Activated CD4-positive, alpha-beta T cell treated with anti-CD3 and anti-CD28 coated beads for 36 hours (primary cell): ENCODE measurements at regions of chr22 and their contacts with region 1.

Region 1: GRCh38 chr22:44497218-44497904 is 672 bp downstream of the RTL6 start:
- DNase-seq: no peak
- ATAC-seq: no peak
- H3K4me3 Mint-ChIP-seq: peak overlapping the region; percentile 68
- H3K27ac Mint-ChIP-seq: peak overlapping the region; percentile 47
- H3K4me1 Mint-ChIP-seq: peaks cover 30% of the 10 kb centered on the region
- H3K27me3 Mint-ChIP-seq: no peaks in the 10 kb centered on the region

Region 2: DNA sequence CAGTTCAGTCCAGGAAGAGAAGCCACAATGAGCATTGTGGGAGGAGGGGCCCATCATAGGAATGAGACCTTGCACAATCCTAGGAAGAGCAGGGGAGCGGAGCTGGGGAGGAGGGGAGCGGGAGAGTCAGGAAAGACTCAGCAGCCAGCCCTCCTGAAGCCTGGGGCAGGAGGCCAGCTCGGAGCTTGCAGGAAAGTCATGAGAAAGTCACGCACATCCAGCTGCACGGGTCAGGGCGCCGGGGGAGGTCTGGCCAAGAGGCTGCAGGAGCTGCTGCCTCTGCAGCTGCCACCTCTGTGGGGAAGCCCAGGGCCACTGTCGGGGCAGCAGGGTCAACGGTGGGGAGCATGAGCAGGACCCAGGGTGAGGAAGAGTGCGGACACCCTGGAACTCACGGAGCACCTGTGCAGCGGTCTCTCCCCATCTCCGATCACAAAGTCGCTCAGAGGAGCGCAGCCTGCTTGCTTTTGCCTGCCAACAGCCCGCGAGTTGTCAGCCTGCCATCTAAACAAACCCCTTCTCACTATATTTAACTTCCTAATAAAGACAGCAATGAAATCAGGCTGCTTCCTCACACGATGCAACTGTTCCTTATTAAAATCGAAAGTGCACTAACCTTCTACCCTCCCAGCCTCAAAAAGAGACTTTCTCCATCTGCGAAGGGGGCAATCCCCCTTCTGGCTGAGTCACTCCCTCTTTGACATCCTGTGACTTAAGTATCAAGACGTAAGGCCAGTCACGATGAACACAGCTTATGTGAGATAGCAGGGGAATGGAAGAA is 53.5 kb after region 1 on chr22:
- CTCF ChIA-PET with region 1: no interaction called
- POLR2A ChIA-PET with region 1: no interaction called
- intact Hi-C with region 1: loop called in 1 of 2 experiments (anchors 1 kb)
- DNase-seq: peak; percentile 68
- ATAC-seq: peak; percentile 99
- H3K4me3 Mint-ChIP-seq: no peak overlapping the region
- H3K27ac Mint-ChIP-seq: no peak overlapping the region
- H3K4me1 Mint-ChIP-seq: peaks cover 10% of the 10 kb centered on the region
- H3K27me3 Mint-ChIP-seq: peaks cover 7% of the 10 kb centered on the region

Region 3: DNA sequence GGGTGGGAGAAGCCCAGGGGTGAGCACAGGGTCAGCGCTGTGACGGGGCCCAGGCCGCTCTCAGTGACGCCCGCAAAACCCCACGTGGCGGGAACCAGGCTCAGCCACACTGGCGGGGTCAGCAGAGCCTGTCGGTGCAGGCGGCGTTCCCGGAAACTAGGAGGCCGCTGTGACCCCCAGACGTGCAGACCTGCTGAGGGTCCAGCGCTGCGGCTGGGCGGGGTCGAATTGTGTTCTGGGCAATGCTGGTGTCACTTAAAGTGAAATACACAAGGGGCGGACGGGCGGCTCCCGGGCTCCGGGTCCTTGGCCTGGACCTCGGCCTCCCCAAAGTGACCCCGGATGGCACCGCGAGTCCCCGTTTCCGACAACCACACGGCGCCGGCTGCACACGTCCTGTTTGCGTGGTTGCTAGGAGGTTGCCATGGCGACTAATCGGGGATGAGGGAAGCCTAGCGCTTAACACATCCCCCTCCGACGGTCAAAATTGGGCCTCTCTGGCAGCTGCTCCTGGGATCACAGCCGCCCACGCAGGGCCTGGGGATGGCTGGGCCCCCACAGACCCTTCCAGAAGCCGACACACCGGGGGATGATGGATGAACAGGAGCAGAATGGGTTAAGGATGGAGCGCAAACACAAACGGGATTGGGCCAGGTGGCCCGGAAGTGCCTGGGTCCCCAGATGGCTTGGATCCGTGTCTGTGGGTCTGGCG is 122.9 kb after region 1 on chr22:
- CTCF ChIA-PET with region 1: no interaction called
- POLR2A ChIA-PET with region 1: no interaction called
- intact Hi-C with region 1: loop called in 1 of 2 experiments (anchors 1 kb)
- DNase-seq: peak; percentile 89
- ATAC-seq: peak; percentile 76
- H3K4me3 Mint-ChIP-seq: no peak overlapping the region
- H3K27ac Mint-ChIP-seq: peak overlapping the region; percentile 68
- H3K4me1 Mint-ChIP-seq: no peaks in the 10 kb centered on the region
- H3K27me3 Mint-ChIP-seq: no peaks in the 10 kb centered on the region